ENCODE measurements at regions of chr12 and their contacts with region 1.

Region 1: GRCh38 chr12:47837190-47838171 is 17.8 kb upstream of the HDAC7 start:
- DNase-seq: peak; percentile 77
- ATAC-seq: no peak
- H3K4me3 Mint-ChIP-seq: peak overlapping the region; percentile 31
- H3K27ac Mint-ChIP-seq: peak overlapping the region; percentile 79
- H3K4me1 Mint-ChIP-seq: peaks cover 57% of the 10 kb centered on the region
- H3K27me3 Mint-ChIP-seq: no peaks in the 10 kb centered on the region
- CTCF ChIP-seq: peak; percentile 96

Region 2: GRCh38 chr12:47758834-47759690 is 78.4 kb before region 1 on chr12 and contains the start of gene RAPGEF3:
- CTCF ChIA-PET with region 1: interaction called, 26 read pairs
- POLR2A ChIA-PET with region 1: interaction called, 5 read pairs
- intact Hi-C with region 1: no loop called
- DNase-seq: peak; percentile 71
- ATAC-seq: peak; percentile 65
- H3K4me3 Mint-ChIP-seq: peak within 1 kb of the TSS; percentile 65
- H3K27ac Mint-ChIP-seq: no peak within 1 kb of the TSS
- H3K4me1 Mint-ChIP-seq: peaks cover 30% of the 10 kb centered on the region
- H3K27me3 Mint-ChIP-seq: no peaks in the 10 kb centered on the region
- CTCF ChIP-seq: peak; percentile 68
- total RNA-seq, gene RAPGEF3: 0.56 to 0.58 TPM

Region 3: GRCh38 chr12:47779301-47779942 is 58.1 kb before region 1 on chr12:
- CTCF ChIA-PET with region 1: interaction called, 164 read pairs
- POLR2A ChIA-PET with region 1: interaction called, 14 read pairs
- intact Hi-C with region 1: loop called (anchors 5 kb)
- DNase-seq: peak; percentile 96
- ATAC-seq: peak; percentile 80
- H3K4me3 Mint-ChIP-seq: peak overlapping the region; percentile 7
- H3K27ac Mint-ChIP-seq: peak overlapping the region; percentile 18
- H3K4me1 Mint-ChIP-seq: peaks cover 31% of the 10 kb centered on the region
- H3K27me3 Mint-ChIP-seq: no peaks in the 10 kb centered on the region
- CTCF ChIP-seq: peak; percentile 89

Region 4: DNA sequence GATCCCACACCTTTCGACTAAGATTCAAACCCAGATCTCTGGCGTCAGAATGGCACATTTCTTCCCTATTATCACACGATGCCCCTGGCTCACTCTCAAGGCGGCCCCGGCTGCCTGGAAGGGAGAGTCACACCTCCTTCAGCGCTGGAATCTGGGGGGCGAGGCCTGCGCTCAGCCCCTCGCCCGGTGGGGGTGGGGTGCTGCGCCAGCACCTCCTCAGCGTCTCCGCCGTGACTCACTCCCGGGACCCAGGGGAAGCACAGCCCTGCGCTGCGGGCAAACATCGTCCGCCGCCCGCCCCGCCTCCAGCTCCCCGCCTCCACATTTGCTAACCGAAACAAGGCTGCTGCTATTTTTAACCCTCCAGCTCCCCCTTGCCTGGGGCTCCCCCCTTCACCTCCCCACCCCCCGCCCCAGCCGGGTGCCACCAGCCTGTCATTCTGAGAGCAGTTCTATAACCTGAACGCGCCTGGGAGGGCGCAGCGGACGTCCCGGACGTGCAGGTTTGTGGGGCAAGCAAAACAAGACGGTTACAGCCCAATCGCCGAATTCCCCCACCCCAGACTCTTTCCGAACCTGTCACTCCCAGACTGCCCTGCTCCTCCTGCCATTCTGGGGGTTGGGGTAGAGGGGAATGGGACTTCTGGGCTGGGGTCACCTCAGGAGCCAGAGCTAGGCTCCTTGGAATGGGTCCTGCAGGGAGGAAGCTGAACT is 24.5 kb before region 1 on chr12:
- CTCF ChIA-PET with region 1: interaction called, 624 read pairs
- POLR2A ChIA-PET with region 1: interaction called, 904 read pairs
- intact Hi-C with region 1: loop called (anchors 1 kb)
- DNase-seq: peak; percentile 98
- ATAC-seq: peak; percentile 68
- H3K4me3 Mint-ChIP-seq: peak overlapping the region; percentile 86
- H3K27ac Mint-ChIP-seq: peak overlapping the region; percentile 98
- H3K4me1 Mint-ChIP-seq: peaks cover 63% of the 10 kb centered on the region
- H3K27me3 Mint-ChIP-seq: no peaks in the 10 kb centered on the region
- CTCF ChIP-seq: no peak

Region 5: GRCh38 chr12:47863467-47863866 is 26.0 kb after region 1 on chr12:
- CTCF ChIA-PET with region 1: interaction called, 22 read pairs
- POLR2A ChIA-PET with region 1: interaction called, 8 read pairs
- intact Hi-C with region 1: no loop called
- DNase-seq: no peak
- ATAC-seq: no peak
- H3K4me3 Mint-ChIP-seq: no peak overlapping the region
- H3K27ac Mint-ChIP-seq: peak overlapping the region; percentile 25
- H3K4me1 Mint-ChIP-seq: peaks cover 72% of the 10 kb centered on the region
- H3K27me3 Mint-ChIP-seq: no peaks in the 10 kb centered on the region
- CTCF ChIP-seq: no peak

Region 6: GRCh38 chr12:47882781-47883546 is 45.5 kb after region 1 on chr12:
- CTCF ChIA-PET with region 1: interaction called, 19 read pairs
- POLR2A ChIA-PET with region 1: interaction called, 13 read pairs
- intact Hi-C with region 1: no loop called
- DNase-seq: peak; percentile 78
- ATAC-seq: peak; percentile 17
- H3K4me3 Mint-ChIP-seq: peak overlapping the region; percentile 76
- H3K27ac Mint-ChIP-seq: peak overlapping the region; percentile 96
- H3K4me1 Mint-ChIP-seq: peaks cover 74% of the 10 kb centered on the region
- H3K27me3 Mint-ChIP-seq: no peaks in the 10 kb centered on the region
- CTCF ChIP-seq: no peak

Region 7: GRCh38 chr12:48247181-48247966 is 409.9 kb after region 1 on chr12:
- CTCF ChIA-PET with region 1: no interaction called
- POLR2A ChIA-PET with region 1: no interaction called
- intact Hi-C with region 1: no loop called
- DNase-seq: no peak
- ATAC-seq: no peak
- H3K4me3 Mint-ChIP-seq: no peak overlapping the region
- H3K27ac Mint-ChIP-seq: no peak overlapping the region
- H3K4me1 Mint-ChIP-seq: no peaks in the 10 kb centered on the region
- H3K27me3 Mint-ChIP-seq: peaks cover 9% of the 10 kb centered on the region
- CTCF ChIP-seq: no peak

Measured in activated CD8-positive, alpha-beta T cell treated with anti-CD3 and anti-CD28 coated beads for 36 hours (primary cell).